Heart right ventricle (tissue), 16 donors: ENCODE measurements at regions of chr14 and their contacts with region 1.

Region 1: DNA sequence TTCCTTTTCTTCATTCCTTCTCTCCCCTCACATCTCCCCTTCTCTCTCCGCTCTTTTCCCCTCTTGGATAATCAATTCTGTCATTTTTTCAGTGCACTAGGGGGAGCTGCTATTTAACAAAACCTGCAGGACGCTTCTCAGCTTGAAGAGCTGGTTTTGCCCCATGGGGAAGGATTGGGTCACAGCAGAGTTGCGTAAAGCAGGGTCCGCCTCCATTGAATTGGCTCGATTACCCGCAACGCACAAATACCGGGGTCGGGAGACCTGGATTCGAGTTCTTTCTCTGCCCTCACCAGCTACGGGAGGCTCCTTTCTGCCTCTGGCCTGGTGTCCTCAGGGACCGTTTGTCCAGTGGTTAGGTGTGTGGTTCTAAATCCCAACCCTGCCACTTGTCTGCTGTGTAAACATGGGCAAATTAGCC is 42.1 kb upstream of the CHGA start:
- DNase-seq: no peak
- ATAC-seq: peak in 3 of 8 donors; percentile 39 to 50 (median 46)
- H3K4me3 ChIP-seq: no peak overlapping the region
- H3K27ac ChIP-seq: no peak overlapping the region
- H3K4me1 ChIP-seq: peaks cover 4 to 20% (median 10%) of the 10 kb centered on the region in 9 donors
- H3K27me3 ChIP-seq: peaks cover 0 to 26% (median 0%) of the 10 kb centered on the region in 7 donors
- CTCF ChIP-seq: peak in 8 of 9 donors; percentile 11 to 47 (median 34)

Region 2: DNA sequence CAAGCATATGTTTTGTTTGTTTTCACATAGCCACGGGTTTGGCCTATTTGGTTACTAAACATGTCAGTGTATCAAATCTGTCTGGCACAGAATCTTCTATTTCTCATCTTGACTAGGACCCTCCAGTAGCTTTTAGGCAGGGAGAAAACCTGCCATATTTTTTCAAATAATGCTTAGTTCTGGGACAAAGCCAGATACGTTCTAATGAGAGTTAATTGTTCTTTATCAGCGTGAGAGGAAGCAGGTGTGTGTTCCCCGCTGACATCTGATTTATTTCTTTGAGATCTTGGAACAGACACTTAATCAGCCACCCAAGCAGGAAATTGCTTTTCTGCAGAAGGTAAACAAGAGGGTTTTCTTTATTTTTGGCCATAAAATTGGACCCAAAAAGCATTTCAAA is 32.0 kb before region 1 on chr14:
- intact Hi-C with region 1: loop called in 1 of 10 experiments (anchors 1 kb)
- DNase-seq: peak in 1 of 2 donors; percentile 13
- ATAC-seq: peak in 6 of 8 donors; percentile 43 to 79 (median 69)
- H3K4me3 ChIP-seq: no peak overlapping the region
- H3K27ac ChIP-seq: no peak overlapping the region
- H3K4me1 ChIP-seq: peaks cover 0 to 34% (median 17%) of the 10 kb centered on the region in 9 donors
- H3K27me3 ChIP-seq: no peaks in the 10 kb centered on the region
- CTCF ChIP-seq: no peak

Region 3: GRCh38 chr14:92914087-92914656 is 33.3 kb after region 1 on chr14:
- intact Hi-C with region 1: no loop called
- DNase-seq: peak; percentile 18 to 28
- ATAC-seq: peak in 2 of 8 donors; percentile 31 to 48
- H3K4me3 ChIP-seq: no peak overlapping the region
- H3K27ac ChIP-seq: no peak overlapping the region
- H3K4me1 ChIP-seq: no peaks in the 10 kb centered on the region
- H3K27me3 ChIP-seq: peaks cover 0 to 41% (median 19%) of the 10 kb centered on the region in 7 donors
- CTCF ChIP-seq: no peak

Region 4: GRCh38 chr14:93137864-93138263 is 257.0 kb after region 1 on chr14:
- intact Hi-C with region 1: loop called in 3 of 10 experiments (anchors 5 to 10 kb)
- DNase-seq: peak in 1 of 2 donors; percentile 63
- ATAC-seq: peak; percentile 61 to 79 (median 74)
- H3K4me3 ChIP-seq: no peak overlapping the region
- H3K27ac ChIP-seq: no peak overlapping the region
- H3K4me1 ChIP-seq: peaks cover 0 to 9% (median 0%) of the 10 kb centered on the region in 9 donors
- H3K27me3 ChIP-seq: no peaks in the 10 kb centered on the region
- CTCF ChIP-seq: peak in 4 of 9 donors; percentile 12 to 30 (median 21)

Region 5: GRCh38 chr14:93146119-93146518 is 265.2 kb after region 1 on chr14:
- intact Hi-C with region 1: loop called in 1 of 10 experiments (anchors 10 kb)
- DNase-seq: no peak
- ATAC-seq: no peak
- H3K4me3 ChIP-seq: no peak overlapping the region
- H3K27ac ChIP-seq: no peak overlapping the region
- H3K4me1 ChIP-seq: peaks cover 0 to 12% (median 0%) of the 10 kb centered on the region in 9 donors
- H3K27me3 ChIP-seq: no peaks in the 10 kb centered on the region
- CTCF ChIP-seq: no peak

Region 6: GRCh38 chr14:93171376-93171775 is 290.5 kb after region 1 on chr14:
- intact Hi-C with region 1: no loop called
- DNase-seq: no peak
- ATAC-seq: no peak
- H3K4me3 ChIP-seq: no peak overlapping the region
- H3K27ac ChIP-seq: no peak overlapping the region
- H3K4me1 ChIP-seq: no peaks in the 10 kb centered on the region
- H3K27me3 ChIP-seq: peaks cover 0 to 6% (median 0%) of the 10 kb centered on the region in 7 donors
- CTCF ChIP-seq: no peak

Region 7: DNA sequence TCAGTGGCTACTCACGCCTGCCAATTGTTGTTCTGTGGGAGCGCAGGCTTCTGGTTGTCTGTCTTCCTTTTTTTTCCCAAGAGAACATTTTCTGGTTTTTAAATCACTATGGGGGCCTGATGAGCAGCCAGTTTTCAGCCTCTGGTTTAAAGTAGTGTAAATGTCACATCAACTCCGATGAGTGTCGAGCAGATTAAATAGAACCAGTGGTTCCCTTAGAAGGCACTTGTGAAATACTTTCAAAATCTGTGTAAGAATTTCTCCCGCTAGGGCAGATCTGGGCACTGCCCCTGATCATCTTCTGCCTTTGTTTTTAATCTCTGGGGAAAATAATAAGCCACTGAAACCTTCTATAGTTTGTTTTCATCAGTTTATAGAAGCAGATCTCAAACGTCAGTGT is 777.0 kb after region 1 on chr14:
- intact Hi-C with region 1: no loop called
- DNase-seq: no peak
- ATAC-seq: no peak
- H3K4me3 ChIP-seq: no peak overlapping the region
- H3K27ac ChIP-seq: no peak overlapping the region
- H3K4me1 ChIP-seq: no peaks in the 10 kb centered on the region
- H3K27me3 ChIP-seq: peaks cover 0 to 11% (median 0%) of the 10 kb centered on the region in 7 donors
- CTCF ChIP-seq: no peak